PC-9 (cell line): ENCODE measurements at regions of chr3 and their contacts with region 1.

Region 1: DNA sequence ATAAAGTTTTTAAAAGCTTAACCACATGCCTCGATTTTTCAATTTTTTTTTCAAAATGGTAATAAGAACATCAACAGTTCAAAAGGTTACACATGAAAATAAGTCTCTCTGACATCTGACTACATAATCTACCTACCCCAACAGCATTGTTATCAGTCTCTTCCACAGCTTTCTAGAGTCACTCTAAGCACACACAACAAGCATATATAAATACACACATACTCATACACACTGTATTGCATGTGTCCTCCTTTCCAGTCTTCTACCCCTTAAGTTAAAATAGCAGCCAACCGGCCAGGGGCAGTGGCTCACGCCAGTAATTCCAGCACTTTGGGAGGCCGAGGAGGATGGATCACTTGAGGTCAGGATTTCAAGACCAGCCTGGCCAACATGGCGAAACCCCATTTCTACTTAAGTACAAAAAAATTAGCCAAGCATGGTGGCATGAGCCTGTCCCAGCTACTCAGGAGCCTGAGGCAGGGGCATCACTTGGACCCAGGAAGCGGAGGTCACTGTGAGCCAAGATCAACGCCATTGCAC is 12.2 kb downstream of the TBL1XR1 start:
- DNase-seq: no peak
- H3K4me3 ChIP-seq: no peak overlapping the region
- H3K27ac ChIP-seq: 0 out of 2 replicates have a peak overlapping the region, but pooled peaks have one; percentile 28
- H3K4me1 ChIP-seq: 0 out of 2 replicates have a peak, but pooled peaks cover 5% of the 10 kb centered on the region
- H3K27me3 ChIP-seq: no peaks in the 10 kb centered on the region
- CTCF ChIP-seq: no peak

Region 2: DNA sequence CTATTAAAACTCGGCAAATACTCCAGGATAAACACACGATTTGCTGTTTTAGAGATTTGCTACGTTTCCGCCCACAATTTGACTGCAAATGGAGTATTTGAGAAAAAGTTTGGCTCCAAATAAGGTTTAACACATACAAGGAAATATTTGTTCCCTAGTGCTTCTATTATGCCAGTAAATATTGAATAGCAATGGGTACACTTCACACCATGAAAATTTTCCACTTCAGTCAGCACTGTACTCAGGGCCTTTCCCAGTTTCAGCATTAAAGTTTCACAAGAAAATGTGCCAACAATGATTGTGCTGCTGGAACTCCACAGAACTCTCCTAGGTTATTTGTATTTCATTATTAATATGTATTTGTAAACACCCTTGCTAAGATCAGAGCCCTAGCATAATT is 485.8 kb before region 1 on chr3:
- CTCF ChIA-PET with region 1: no interaction called
- POLR2A ChIA-PET with region 1: interaction called, 10 read pairs
- intact Hi-C with region 1: no loop called
- DNase-seq: no peak
- H3K4me3 ChIP-seq: no peak overlapping the region
- H3K27ac ChIP-seq: no peak overlapping the region
- H3K4me1 ChIP-seq: no peaks in the 10 kb centered on the region
- H3K27me3 ChIP-seq: no peaks in the 10 kb centered on the region
- CTCF ChIP-seq: no peak